Right lobe of liver (tissue), 6 donors: ENCODE measurements at regions of chr2 and their contacts with region 1.

Region 1: DNA sequence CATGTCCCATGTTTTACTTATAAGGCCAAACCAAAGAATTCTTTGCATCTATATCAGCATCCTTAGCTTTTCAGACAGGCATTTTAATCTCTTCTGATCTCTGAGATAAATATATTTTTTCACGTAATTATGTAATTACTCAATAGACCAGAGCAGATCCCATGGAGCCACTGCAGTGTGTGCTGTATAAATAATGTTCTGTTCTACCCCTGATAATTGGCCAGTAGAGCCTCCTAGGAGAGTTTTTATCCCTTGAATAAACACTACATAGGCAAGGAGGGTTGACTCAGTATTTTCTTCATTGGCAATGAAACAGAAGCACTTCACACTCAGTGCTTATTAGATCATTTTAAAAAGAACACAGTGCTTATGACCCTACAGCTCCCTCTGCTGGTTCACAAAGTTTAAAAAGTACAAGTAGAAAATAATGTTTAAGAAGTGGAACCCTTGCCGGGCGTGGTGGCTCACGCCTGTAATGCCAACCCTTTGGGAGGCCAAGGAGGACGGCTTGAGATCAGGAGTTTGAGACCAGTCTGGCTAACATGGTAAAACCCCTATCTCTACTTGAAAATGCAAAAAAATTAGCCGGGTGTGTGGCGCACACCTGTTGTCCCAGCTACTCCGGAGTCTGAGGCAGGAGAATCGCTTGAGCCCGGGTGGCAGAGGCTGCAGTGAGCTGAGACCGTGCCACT is 91.9 kb downstream of the PPP1R1C start:
- DNase-seq: peak in 1 of 3 donors; percentile 51
- ATAC-seq: peak; percentile 96 to 99 (median 96)
- H3K4me3 ChIP-seq: peak overlapping the region in 2 of 3 donors; percentile 1 to 8
- H3K27ac ChIP-seq: peak overlapping the region in 2 of 3 donors; percentile 18 to 50
- H3K4me1 ChIP-seq: peaks cover 0 to 17% (median 0%) of the 10 kb centered on the region in 4 donors
- H3K27me3 ChIP-seq: no peaks in the 10 kb centered on the region
- CTCF ChIP-seq: peak; percentile 66 to 82 (median 72)
- POLR2A ChIP-seq: no peak

Region 2: GRCh38 chr2:181742922-181743722 is 334.5 kb before region 1 on chr2:
- intact Hi-C with region 1: loop called in 1 of 2 experiments (anchors 5 kb)
- DNase-seq: peak in 1 of 3 donors; percentile 46
- ATAC-seq: peak; percentile 82 to 94 (median 90)
- H3K4me3 ChIP-seq: peak overlapping the region in 1 of 3 donors; percentile 28
- H3K27ac ChIP-seq: no peak overlapping the region
- H3K4me1 ChIP-seq: no peaks in the 10 kb centered on the region
- H3K27me3 ChIP-seq: no peaks in the 10 kb centered on the region
- CTCF ChIP-seq: peak; percentile 64 to 77 (median 67)
- POLR2A ChIP-seq: no peak

Region 3: GRCh38 chr2:182266909-182267308 is 189.3 kb after region 1 on chr2:
- intact Hi-C with region 1: no loop called
- DNase-seq: no peak
- ATAC-seq: no peak
- H3K4me3 ChIP-seq: no peak overlapping the region
- H3K27ac ChIP-seq: no peak overlapping the region
- H3K4me1 ChIP-seq: no peaks in the 10 kb centered on the region
- H3K27me3 ChIP-seq: no peaks in the 10 kb centered on the region
- CTCF ChIP-seq: no peak
- POLR2A ChIP-seq: no peak

Region 4: GRCh38 chr2:182553483-182553882 is 475.9 kb after region 1 on chr2:
- intact Hi-C with region 1: no loop called
- DNase-seq: no peak
- ATAC-seq: peak in 2 of 4 donors; percentile 34 to 39
- H3K4me3 ChIP-seq: no peak overlapping the region
- H3K27ac ChIP-seq: no peak overlapping the region
- H3K4me1 ChIP-seq: no peaks in the 10 kb centered on the region
- H3K27me3 ChIP-seq: no peaks in the 10 kb centered on the region
- CTCF ChIP-seq: no peak
- POLR2A ChIP-seq: no peak